ENCODE measurements at regions of chr17 and their contacts with region 1.

Region 1: GRCh38 chr17:76048711-76049110 is 21.6 kb upstream of the EVPL start:
- DNase-seq: no peak
- H3K4me3 Mint-ChIP-seq: no peak overlapping the region
- H3K27ac Mint-ChIP-seq: peak overlapping the region; percentile 7
- H3K4me1 Mint-ChIP-seq: peaks cover 31% of the 10 kb centered on the region
- H3K27me3 Mint-ChIP-seq: no peaks in the 10 kb centered on the region

Region 2: DNA sequence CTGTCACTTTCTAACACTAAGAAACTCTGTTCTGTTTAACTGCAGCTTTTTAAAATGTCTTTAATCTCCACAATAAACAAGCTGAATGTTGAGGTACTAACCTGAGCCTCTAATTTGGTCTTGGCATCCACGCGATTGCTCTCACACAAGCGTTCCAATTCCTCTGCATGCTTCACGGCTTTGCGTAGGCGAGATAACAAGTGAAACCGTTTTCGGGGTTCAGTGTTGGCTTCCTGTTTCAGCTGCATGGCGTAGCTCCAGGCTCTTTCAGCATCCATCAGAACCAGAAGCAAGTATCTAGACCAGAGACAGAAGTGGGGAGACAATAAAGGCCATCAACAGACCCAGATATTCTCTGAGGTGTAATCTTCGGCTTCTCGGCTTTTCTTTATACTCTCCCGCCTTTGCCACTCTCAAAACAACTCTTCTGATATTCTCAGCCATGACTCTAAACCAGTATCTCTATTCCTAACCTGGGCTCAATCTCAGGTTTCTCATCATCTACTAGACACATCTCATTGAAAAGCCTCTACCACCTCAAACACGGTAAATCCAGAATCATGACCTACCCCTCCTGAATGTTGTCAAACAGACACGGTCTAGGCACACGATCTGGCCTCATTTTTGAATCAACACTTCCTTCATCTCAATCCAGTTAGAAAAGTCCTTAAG is 15.3 kb after region 1 on chr17:
- CTCF ChIA-PET with region 1: no interaction called
- POLR2A ChIA-PET with region 1: no interaction called
- intact Hi-C with region 1: loop called (anchors 2 kb)
- DNase-seq: peak; percentile 80
- H3K4me3 Mint-ChIP-seq: peak overlapping the region; percentile 25
- H3K27ac Mint-ChIP-seq: peak overlapping the region; percentile 84
- H3K4me1 Mint-ChIP-seq: peaks cover 31% of the 10 kb centered on the region
- H3K27me3 Mint-ChIP-seq: no peaks in the 10 kb centered on the region